Heart right ventricle (tissue), 16 donors: ENCODE measurements at regions of chr19 and their contacts with region 1.

Region 1: GRCh38 chr19:33758541-33759013 is 38.1 kb upstream of the KCTD15 start:
- DNase-seq: no peak
- ATAC-seq: peak in 7 of 8 donors; percentile 17 to 78 (median 59)
- H3K4me3 ChIP-seq: no peak overlapping the region
- H3K27ac ChIP-seq: no peak overlapping the region
- H3K4me1 ChIP-seq: peaks cover 0 to 7% (median 0%) of the 10 kb centered on the region in 9 donors
- H3K27me3 ChIP-seq: peaks cover 0 to 11% (median 0%) of the 10 kb centered on the region in 7 donors
- CTCF ChIP-seq: no peak

Region 2: GRCh38 chr19:33541834-33542472 is 216.6 kb before region 1 on chr19:
- intact Hi-C with region 1: loop called in 1 of 10 experiments (anchors 10 kb)
- DNase-seq: no peak
- ATAC-seq: no peak
- H3K4me3 ChIP-seq: no peak overlapping the region
- H3K27ac ChIP-seq: no peak overlapping the region
- H3K4me1 ChIP-seq: no peaks in the 10 kb centered on the region
- H3K27me3 ChIP-seq: peaks cover 0 to 72% (median 39%) of the 10 kb centered on the region in 7 donors
- CTCF ChIP-seq: no peak